MCF 10A (cell line): ENCODE measurements at regions of chr3 and their contacts with region 1.

Region 1: GRCh38 chr3:94985799-94986198 is 922.9 kb downstream of the NSUN3 start:
- DNase-seq: no peak
- H3K4me3 Mint-ChIP-seq: no peak overlapping the region
- H3K27ac Mint-ChIP-seq: no peak overlapping the region
- H3K4me1 Mint-ChIP-seq: no peaks in the 10 kb centered on the region
- H3K27me3 Mint-ChIP-seq: peaks cover 55% of the 10 kb centered on the region
- CTCF ChIP-seq: no peak

Region 2: DNA sequence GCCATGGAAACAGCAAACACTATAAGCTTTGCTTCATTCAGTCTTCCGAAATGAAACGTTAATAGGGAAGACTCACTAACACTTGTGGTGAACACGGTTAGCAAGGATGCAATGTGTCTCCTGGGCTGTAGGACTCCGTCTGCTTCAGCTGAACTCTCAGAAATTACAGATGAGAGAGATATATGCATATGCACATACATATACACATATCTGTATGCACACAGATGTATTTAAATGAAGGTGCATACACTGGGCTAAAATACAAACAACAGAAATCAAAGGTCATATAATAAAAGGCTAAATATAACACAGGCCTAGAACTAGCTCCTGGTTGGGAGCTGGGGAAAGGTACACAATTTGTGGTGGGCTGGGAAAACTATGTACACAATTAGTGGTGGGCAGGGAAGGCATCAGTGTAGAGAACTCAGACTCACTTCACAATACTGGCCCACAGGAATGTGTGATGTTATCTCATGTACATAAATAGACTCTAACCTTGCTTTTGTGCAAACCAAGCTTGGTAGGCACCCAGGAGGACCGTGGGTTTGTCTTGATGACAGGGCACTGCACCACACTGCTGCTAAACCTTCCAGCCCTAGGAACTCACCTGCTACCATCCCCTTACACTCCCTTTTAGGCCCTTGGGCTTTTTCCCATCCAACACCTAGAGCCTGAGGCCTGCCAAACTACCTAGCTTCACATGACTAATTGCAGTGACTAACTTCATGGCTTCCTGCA is 49.9 kb before region 1 on chr3:
- CTCF ChIA-PET with region 1: no interaction called
- POLR2A ChIA-PET with region 1: no interaction called
- intact Hi-C with region 1: no loop called
- DNase-seq: peak; percentile 16
- H3K4me3 Mint-ChIP-seq: no peak overlapping the region
- H3K27ac Mint-ChIP-seq: no peak overlapping the region
- H3K4me1 Mint-ChIP-seq: peaks cover 11% of the 10 kb centered on the region
- H3K27me3 Mint-ChIP-seq: no peaks in the 10 kb centered on the region
- CTCF ChIP-seq: no peak

Region 3: DNA sequence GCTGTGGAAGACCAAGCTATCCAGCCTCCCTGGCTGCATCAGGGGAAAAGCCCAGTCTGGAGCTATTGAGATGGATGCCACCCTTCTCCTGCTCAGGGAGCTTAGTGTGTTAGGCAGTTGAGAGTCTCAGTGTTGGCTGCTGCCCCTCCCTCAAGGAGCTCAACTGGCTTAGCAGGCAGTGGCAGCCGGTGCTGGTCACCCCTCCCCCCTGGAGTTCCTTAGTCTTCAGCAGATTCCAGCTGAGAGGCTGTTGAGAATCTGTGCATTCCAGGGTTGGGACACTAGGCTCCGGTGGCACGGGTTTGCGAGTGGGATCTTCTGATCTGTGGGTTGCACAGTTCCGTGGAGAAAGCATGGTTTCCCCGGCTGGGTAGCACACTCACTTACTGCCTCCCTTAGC is 39.1 kb before region 1 on chr3:
- CTCF ChIA-PET with region 1: no interaction called
- POLR2A ChIA-PET with region 1: no interaction called
- intact Hi-C with region 1: no loop called
- DNase-seq: no peak
- H3K4me3 Mint-ChIP-seq: no peak overlapping the region
- H3K27ac Mint-ChIP-seq: no peak overlapping the region
- H3K4me1 Mint-ChIP-seq: no peaks in the 10 kb centered on the region
- H3K27me3 Mint-ChIP-seq: peaks cover 21% of the 10 kb centered on the region
- CTCF ChIP-seq: no peak

Region 4: DNA sequence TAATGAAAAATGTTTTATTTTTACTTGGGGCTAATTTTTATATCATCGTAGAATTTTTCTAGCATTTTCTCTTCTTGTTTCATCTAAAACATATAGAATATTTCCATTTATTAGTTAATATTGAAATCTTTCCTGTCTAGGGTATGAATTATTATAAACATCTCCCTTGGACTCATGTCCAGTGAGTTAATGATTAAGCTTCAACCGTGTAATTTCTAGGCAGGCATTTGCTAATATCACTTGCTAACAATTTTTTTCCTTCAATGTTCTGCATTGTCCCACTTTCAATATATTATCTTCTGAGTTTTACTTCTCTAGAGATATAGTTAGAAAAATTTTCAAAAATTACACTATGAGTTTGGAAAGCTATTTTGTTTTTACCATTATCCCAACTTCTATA is 457.0 kb after region 1 on chr3:
- CTCF ChIA-PET with region 1: no interaction called
- POLR2A ChIA-PET with region 1: no interaction called
- intact Hi-C with region 1: loop called (anchors 10 kb)
- DNase-seq: no peak
- H3K4me3 Mint-ChIP-seq: no peak overlapping the region
- H3K27ac Mint-ChIP-seq: no peak overlapping the region
- H3K4me1 Mint-ChIP-seq: no peaks in the 10 kb centered on the region
- H3K27me3 Mint-ChIP-seq: peaks cover 79% of the 10 kb centered on the region
- CTCF ChIP-seq: no peak